ENCODE measurements at regions of chr12 and their contacts with region 1.

Region 1: GRCh38 chr12:14547571-14547970 is 20.1 kb downstream of the PLBD1 start:
- DNase-seq: no peak
- ATAC-seq: no peak
- H3K4me3 ChIP-seq: no peak overlapping the region
- H3K27ac ChIP-seq: no peak overlapping the region
- H3K4me1 ChIP-seq: no peaks in the 10 kb centered on the region
- H3K27me3 ChIP-seq: no peaks in the 10 kb centered on the region
- CTCF ChIP-seq: no peak

Region 2: GRCh38 chr12:14532152-14532551 is 15.4 kb before region 1 on chr12:
- CTCF ChIA-PET with region 1: no interaction called
- POLR2A ChIA-PET with region 1: interaction called, 14 read pairs
- in situ Hi-C with region 1: no loop called
- intact Hi-C with region 1: no loop called
- DNase-seq: no peak
- ATAC-seq: no peak
- H3K4me3 ChIP-seq: no peak overlapping the region
- H3K27ac ChIP-seq: no peak overlapping the region
- H3K4me1 ChIP-seq: no peaks in the 10 kb centered on the region
- H3K27me3 ChIP-seq: no peaks in the 10 kb centered on the region
- CTCF ChIP-seq: no peak

Measured in Panc1 (cell line).